Activated CD4-positive, alpha-beta memory T cell treated with anti-CD3 and anti-CD28 coated beads for 36 hours (primary cell): ENCODE measurements at regions of chr17 and their contacts with region 1.

Region 1: DNA sequence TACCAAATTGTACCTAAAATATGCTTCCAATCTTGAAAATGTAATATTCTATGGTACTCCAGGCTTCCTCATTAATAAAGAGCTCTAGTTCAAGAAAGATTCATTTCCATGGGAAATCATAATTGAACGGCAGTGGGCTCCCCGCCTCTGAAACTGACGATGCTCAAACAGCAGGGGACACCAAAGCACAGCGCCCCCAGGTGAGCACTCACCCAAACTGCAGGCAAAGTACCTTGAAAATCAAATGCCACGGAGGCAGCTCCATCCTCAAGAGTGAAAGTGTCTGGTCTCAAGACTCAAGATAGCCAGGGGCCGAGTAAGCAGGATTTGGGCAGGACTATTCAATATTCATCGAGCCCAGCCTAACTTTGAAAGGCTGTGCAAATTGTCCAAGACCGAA is 217.4 kb upstream of the TNRC6C start:
- DNase-seq: peak; percentile 72
- H3K4me3 Mint-ChIP-seq: no peak overlapping the region
- H3K27ac Mint-ChIP-seq: no peak overlapping the region
- H3K4me1 Mint-ChIP-seq: no peaks in the 10 kb centered on the region
- H3K27me3 Mint-ChIP-seq: peaks cover 7% of the 10 kb centered on the region

Region 2: DNA sequence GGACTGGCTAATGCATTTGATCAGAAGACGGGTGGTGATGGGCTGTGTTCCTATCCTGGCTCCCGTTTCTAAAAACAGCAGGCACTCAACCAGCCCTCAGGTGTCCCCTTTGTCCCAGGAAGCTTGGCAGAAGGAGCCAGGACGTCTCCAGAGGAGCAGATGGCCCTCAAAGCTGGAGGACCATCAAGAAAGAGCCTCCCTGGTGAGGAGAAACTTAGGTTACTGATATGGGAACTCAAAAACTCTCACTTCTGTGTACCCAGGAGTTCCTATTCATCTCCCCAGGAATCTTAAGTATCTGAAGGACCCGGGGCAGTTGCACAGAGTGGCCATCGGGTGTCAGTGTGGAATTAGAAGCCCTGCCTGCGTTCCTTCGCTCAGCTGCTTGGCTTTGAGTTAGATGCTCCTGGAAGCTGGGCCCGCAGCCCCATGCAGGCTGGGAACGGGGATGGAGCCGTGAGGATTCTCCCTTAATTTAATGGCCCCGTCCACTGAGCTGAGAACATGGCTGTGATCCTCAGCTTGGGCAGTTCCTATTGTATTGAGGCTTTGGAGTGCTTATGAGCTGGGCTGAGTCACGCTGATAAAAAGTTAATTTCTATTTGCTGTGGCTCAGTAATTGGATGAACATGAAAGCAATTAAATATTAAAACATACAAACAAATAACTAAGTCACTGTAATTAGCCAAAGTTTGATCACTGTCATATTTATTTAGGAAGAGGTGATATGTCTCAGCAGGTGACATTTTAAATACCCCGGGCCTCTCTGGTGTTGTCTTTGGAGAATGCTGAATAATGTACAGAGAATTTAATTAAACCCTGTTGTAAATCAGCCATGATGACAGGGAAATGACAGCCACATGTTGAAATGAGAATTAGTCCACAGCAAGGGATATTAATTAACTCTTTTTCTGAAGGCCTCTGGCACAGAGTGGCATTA is 198.3 kb before region 1 on chr17:
- CTCF ChIA-PET with region 1: interaction called, 30 read pairs
- POLR2A ChIA-PET with region 1: no interaction called
- intact Hi-C with region 1: loop called (anchors 2 kb)
- DNase-seq: peak; percentile 76
- H3K4me3 Mint-ChIP-seq: no peak overlapping the region
- H3K27ac Mint-ChIP-seq: no peak overlapping the region
- H3K4me1 Mint-ChIP-seq: no peaks in the 10 kb centered on the region
- H3K27me3 Mint-ChIP-seq: peaks cover 9% of the 10 kb centered on the region

Region 3: GRCh38 chr17:77755410-77755963 is 14.4 kb after region 1 on chr17:
- CTCF ChIA-PET with region 1: no interaction called
- POLR2A ChIA-PET with region 1: no interaction called
- intact Hi-C with region 1: no loop called
- DNase-seq: no peak
- H3K4me3 Mint-ChIP-seq: no peak overlapping the region
- H3K27ac Mint-ChIP-seq: no peak overlapping the region
- H3K4me1 Mint-ChIP-seq: no peaks in the 10 kb centered on the region
- H3K27me3 Mint-ChIP-seq: no peaks in the 10 kb centered on the region

Region 4: DNA sequence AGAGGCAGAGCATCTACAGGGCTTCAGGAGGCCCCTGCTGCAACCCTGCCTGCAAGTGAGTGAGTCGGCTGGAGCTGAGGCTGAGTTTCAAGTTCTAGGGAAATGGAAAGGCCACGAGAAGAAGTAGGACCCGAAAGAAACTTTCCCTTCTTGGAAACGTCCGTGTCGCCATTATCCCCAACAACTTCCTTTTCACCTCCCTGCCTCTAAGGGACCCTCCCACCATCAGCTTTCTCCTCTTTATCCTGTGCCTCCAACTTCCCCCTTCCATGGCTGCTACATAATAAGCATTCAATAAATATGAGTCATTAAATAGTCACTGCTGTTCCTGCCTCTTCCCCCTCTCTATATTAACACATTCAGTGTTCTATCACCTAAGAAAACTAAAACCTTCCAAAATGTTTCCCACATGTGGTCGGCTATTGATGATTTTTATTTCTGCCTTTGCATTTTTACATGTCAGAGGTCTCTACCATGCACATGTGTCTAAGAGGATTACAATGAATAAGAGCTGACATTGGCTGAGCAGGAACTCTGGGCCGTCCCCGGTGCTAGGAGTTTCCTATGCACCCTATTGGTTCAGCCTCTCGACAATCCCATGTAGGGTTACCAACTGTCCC is 101.5 kb after region 1 on chr17:
- CTCF ChIA-PET with region 1: no interaction called
- POLR2A ChIA-PET with region 1: no interaction called
- intact Hi-C with region 1: no loop called
- DNase-seq: peak; percentile 51
- H3K4me3 Mint-ChIP-seq: no peak overlapping the region
- H3K27ac Mint-ChIP-seq: peak overlapping the region; percentile 25
- H3K4me1 Mint-ChIP-seq: peaks cover 50% of the 10 kb centered on the region
- H3K27me3 Mint-ChIP-seq: peaks cover 2% of the 10 kb centered on the region